Endothelial cell of umbilical vein (primary cell): ENCODE measurements at regions of chr12 and their contacts with region 1.

Region 1: GRCh38 chr12:107760809-107761501 is at the start of gene PRDM4:
- DNase-seq: peak; percentile 96
- H3K4me3 ChIP-seq: peak within 1 kb of the TSS; percentile 52 to 88 (median 71)
- H3K27ac ChIP-seq: peak within 1 kb of the TSS; percentile 74
- H3K4me1 ChIP-seq: peaks cover 27% of the 10 kb centered on the region
- H3K27me3 ChIP-seq: peaks cover 1 to 8% of the 10 kb centered on the region in 2 experiments
- CTCF ChIP-seq: peak in 1 of 2 donors; percentile 22
- POLR2A ChIP-seq: peak; percentile 85
- total RNA-seq, gene PRDM4: 33.4 and 36.8 TPM in 2 replicates

Region 2: GRCh38 chr12:107622005-107622404 is 138.9 kb before region 1 on chr12:
- CTCF ChIA-PET with region 1: no interaction called
- POLR2A ChIA-PET with region 1: no interaction called
- dilution Hi-C with region 1: no loop called
- intact Hi-C with region 1: no loop called
- DNase-seq: no peak
- H3K4me3 ChIP-seq: no peak overlapping the region
- H3K27ac ChIP-seq: no peak overlapping the region
- H3K4me1 ChIP-seq: no peaks in the 10 kb centered on the region
- H3K27me3 ChIP-seq: no peaks in the 10 kb centered on the region
- CTCF ChIP-seq: peak; percentile 10 to 46
- POLR2A ChIP-seq: no peak

Region 3: GRCh38 chr12:107685360-107686248 is 75.4 kb before region 1 on chr12 and contains the start of gene PWP1:
- CTCF ChIA-PET with region 1: no interaction called
- POLR2A ChIA-PET with region 1: no interaction called
- dilution Hi-C with region 1: no loop called
- intact Hi-C with region 1: loop called (anchors 1 kb)
- DNase-seq: peak; percentile 97
- H3K4me3 ChIP-seq: peak within 1 kb of the TSS; percentile 28 to 80 (median 67)
- H3K27ac ChIP-seq: peak within 1 kb of the TSS; percentile 51
- H3K4me1 ChIP-seq: peaks cover 7% of the 10 kb centered on the region
- H3K27me3 ChIP-seq: no peaks in the 10 kb centered on the region
- CTCF ChIP-seq: no peak
- POLR2A ChIP-seq: peak; percentile 74
- total RNA-seq, gene PWP1: 68.6 and 70.8 TPM in 2 replicates

Region 4: GRCh38 chr12:107748472-107748871 is 12.5 kb before region 1 on chr12:
- CTCF ChIA-PET with region 1: interaction called, 7 read pairs
- POLR2A ChIA-PET with region 1: no interaction called
- dilution Hi-C with region 1: no loop called
- intact Hi-C with region 1: loop called (anchors 1 kb)
- DNase-seq: peak; percentile 84
- H3K4me3 ChIP-seq: peak overlapping the region in 1 of 3 experiments; percentile 42
- H3K27ac ChIP-seq: peak overlapping the region; percentile 83
- H3K4me1 ChIP-seq: peaks cover 47% of the 10 kb centered on the region
- H3K27me3 ChIP-seq: no peaks in the 10 kb centered on the region
- CTCF ChIP-seq: no peak
- POLR2A ChIP-seq: no peak

Region 5: GRCh38 chr12:107884769-107885694 is 124.1 kb after region 1 on chr12:
- CTCF ChIA-PET with region 1: interaction called, 6 read pairs
- POLR2A ChIA-PET with region 1: no interaction called
- dilution Hi-C with region 1: no loop called
- intact Hi-C with region 1: loop called (anchors 1 kb)
- DNase-seq: peak; percentile 54
- H3K4me3 ChIP-seq: no peak overlapping the region
- H3K27ac ChIP-seq: no peak overlapping the region
- H3K4me1 ChIP-seq: no peaks in the 10 kb centered on the region
- H3K27me3 ChIP-seq: no peaks in the 10 kb centered on the region
- CTCF ChIP-seq: peak; percentile 56 to 74
- POLR2A ChIP-seq: no peak